ENCODE measurements at regions of chr3 and their contacts with region 1.

Region 1: GRCh38 chr3:168467115-168467714 is 371.5 kb upstream of the GOLIM4 start:
- DNase-seq: peak; percentile 52
- H3K4me3 Mint-ChIP-seq: no peak overlapping the region
- H3K27ac Mint-ChIP-seq: no peak overlapping the region
- H3K4me1 Mint-ChIP-seq: no peaks in the 10 kb centered on the region
- H3K27me3 Mint-ChIP-seq: no peaks in the 10 kb centered on the region
- CTCF ChIP-seq: peak; percentile 14

Region 2: GRCh38 chr3:168047190-168047795 is 419.9 kb before region 1 on chr3:
- CTCF ChIA-PET with region 1: no interaction called
- intact Hi-C with region 1: loop called (anchors 5 kb)
- DNase-seq: peak; percentile 36
- H3K4me3 Mint-ChIP-seq: no peak overlapping the region
- H3K27ac Mint-ChIP-seq: no peak overlapping the region
- H3K4me1 Mint-ChIP-seq: no peaks in the 10 kb centered on the region
- H3K27me3 Mint-ChIP-seq: no peaks in the 10 kb centered on the region
- CTCF ChIP-seq: peak; percentile 81

Region 3: GRCh38 chr3:168213920-168214319 is 253.3 kb before region 1 on chr3:
- CTCF ChIA-PET with region 1: interaction called, 8 read pairs
- intact Hi-C with region 1: loop called (anchors 1 kb)
- DNase-seq: no peak
- H3K4me3 Mint-ChIP-seq: no peak overlapping the region
- H3K27ac Mint-ChIP-seq: no peak overlapping the region
- H3K4me1 Mint-ChIP-seq: no peaks in the 10 kb centered on the region
- H3K27me3 Mint-ChIP-seq: no peaks in the 10 kb centered on the region
- CTCF ChIP-seq: no peak

Region 4: DNA sequence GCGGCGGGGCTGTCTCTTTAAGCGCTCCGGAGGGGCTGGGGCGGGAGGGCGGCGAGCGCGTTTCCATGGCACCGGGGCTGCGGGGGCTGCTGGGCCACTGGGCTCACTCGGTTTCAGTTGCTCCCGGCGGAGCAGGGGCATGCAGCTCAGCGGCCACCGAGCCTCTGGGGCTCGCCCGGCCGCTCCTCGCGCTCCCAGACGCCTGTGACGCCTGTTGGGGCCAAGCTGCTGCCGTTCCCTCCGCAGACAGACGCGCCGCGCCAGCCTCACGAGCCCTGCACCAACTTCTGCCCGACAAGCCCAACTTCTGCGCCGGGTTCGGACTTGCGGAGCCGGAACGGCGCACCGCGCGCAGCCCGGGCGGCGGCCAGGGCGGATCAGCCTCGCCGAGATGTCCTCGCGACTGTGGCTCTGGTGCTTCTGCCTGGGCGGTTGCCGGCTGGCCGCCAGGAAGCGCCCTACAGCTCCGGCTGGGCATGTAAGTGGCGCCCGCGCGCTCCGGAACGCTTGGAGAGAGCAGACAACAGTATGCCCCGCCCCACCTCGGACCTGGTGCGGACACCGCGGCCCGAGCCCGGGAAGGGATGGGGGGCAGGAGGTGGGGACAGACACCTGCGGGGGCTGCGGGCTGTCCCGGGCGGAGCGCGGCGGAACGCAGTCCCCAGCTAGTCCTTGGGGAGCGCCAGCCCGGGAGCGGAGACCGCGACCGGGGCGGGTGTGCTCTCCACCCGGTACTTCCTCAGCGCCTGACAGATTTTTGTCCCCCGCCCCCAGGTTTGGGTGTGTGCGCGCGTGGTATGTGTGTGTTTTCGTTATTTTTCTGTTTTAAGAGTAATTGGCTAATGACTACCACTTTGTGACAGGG is 217.4 kb before region 1 on chr3:
- CTCF ChIA-PET with region 1: no interaction called
- intact Hi-C with region 1: loop called (anchors 10 kb)
- DNase-seq: peak; percentile 90
- H3K4me3 Mint-ChIP-seq: peak overlapping the region; percentile 90
- H3K27ac Mint-ChIP-seq: peak overlapping the region; percentile 45
- H3K4me1 Mint-ChIP-seq: peaks cover 17% of the 10 kb centered on the region
- H3K27me3 Mint-ChIP-seq: peaks cover 12% of the 10 kb centered on the region
- CTCF ChIP-seq: peak; percentile 61

Region 5: GRCh38 chr3:168490981-168491380 is 23.8 kb after region 1 on chr3:
- CTCF ChIA-PET with region 1: no interaction called
- intact Hi-C with region 1: no loop called
- DNase-seq: no peak
- H3K4me3 Mint-ChIP-seq: no peak overlapping the region
- H3K27ac Mint-ChIP-seq: no peak overlapping the region
- H3K4me1 Mint-ChIP-seq: no peaks in the 10 kb centered on the region
- H3K27me3 Mint-ChIP-seq: no peaks in the 10 kb centered on the region
- CTCF ChIP-seq: no peak

Measured in Calu3 (cell line).